ENCODE measurements at regions of chr20 and their contacts with region 1.

Region 1: DNA sequence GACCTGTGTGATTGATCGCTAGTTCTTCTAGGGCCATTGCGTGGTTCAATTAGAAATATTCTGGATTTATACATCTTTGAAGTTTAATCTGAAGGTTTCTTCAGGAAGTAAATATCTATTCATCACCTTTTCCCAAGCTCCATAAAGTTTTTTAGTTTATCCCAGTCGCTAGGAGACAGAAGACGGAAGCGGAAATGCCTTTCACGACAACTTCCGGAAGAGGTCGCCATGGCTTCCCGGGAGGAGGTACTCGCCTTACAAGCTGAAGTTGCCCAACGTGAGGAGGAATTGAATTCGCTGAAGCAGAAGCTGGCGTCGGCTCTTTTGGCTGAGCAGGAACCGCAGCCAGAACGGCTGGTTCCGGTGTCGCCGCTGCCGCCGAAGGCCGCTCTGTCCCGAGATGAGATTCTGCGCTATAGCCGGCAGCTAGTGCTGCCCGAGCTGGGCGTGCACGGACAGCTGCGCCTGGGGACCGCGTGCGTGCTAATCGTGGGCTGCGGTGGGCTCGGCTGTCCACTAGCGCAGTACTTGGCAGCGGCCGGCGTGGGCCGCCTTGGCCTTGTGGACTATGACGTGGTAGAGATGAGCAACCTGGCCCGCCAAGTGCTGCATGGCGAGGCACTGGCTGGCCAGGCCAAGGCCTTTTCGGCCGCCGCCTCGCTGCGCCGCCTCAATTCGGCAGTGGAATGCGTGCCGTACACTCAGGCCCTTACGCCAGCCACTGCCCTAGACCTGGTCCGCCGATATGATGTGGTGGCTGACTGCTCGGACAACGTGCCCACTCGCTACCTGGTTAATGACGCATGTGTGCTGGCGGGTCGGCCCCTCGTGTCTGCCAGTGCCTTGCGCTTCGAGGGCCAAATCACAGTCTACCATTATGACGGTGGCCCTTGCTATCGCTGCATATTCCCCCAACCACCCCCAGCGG is at the start of gene MOCS3:
- DNase-seq: peak; percentile 85
- ATAC-seq: peak; percentile 84
- H3K4me3 Mint-ChIP-seq: peak within 1 kb of the TSS; percentile 96
- H3K27ac Mint-ChIP-seq: peak within 1 kb of the TSS; percentile 100
- H3K4me1 Mint-ChIP-seq: peaks cover 48% of the 10 kb centered on the region
- H3K27me3 Mint-ChIP-seq: no peaks in the 10 kb centered on the region
- CTCF ChIP-seq: no peak
- total RNA-seq, gene MOCS3: 4.6 TPM

Region 2: GRCh38 chr20:50943069-50943468 is 15.8 kb before region 1 on chr20:
- CTCF ChIA-PET with region 1: interaction called, 11 read pairs
- POLR2A ChIA-PET with region 1: interaction called, 9 read pairs
- intact Hi-C with region 1: no loop called
- DNase-seq: no peak
- ATAC-seq: no peak
- H3K4me3 Mint-ChIP-seq: no peak overlapping the region
- H3K27ac Mint-ChIP-seq: no peak overlapping the region
- H3K4me1 Mint-ChIP-seq: no peaks in the 10 kb centered on the region
- H3K27me3 Mint-ChIP-seq: no peaks in the 10 kb centered on the region
- CTCF ChIP-seq: no peak

Region 3: DNA sequence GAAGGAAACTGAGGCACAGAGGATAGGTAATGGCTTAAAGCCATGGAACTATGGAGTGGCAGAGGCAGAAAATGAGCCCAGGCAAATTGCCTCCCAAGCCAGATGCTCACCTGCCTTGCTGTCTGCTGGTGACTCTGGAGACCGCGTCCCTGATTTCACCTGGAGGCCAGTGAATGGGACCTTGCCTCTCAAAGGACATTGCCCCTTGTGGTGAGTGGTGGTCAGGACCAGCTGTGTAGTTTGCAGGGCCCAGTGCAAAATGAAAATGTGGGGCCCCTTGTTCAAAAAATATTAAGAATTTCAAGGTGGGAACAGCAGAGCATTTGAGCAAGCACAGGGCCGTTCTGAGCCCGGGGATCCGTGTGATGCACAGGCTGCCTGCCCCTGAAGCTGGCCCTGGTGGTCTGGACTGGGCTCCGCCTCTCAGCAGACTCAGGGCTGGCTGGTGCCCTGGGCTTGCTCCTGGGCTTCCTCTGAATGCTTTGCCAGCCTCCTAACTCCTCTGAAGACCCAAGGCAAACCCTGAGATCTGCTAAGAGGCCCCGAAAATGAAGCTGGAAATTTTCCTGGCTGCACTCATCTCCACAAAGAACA is 83.9 kb after region 1 on chr20:
- CTCF ChIA-PET with region 1: no interaction called
- POLR2A ChIA-PET with region 1: no interaction called
- intact Hi-C with region 1: no loop called
- DNase-seq: no peak
- ATAC-seq: no peak
- H3K4me3 Mint-ChIP-seq: no peak overlapping the region
- H3K27ac Mint-ChIP-seq: no peak overlapping the region
- H3K4me1 Mint-ChIP-seq: no peaks in the 10 kb centered on the region
- H3K27me3 Mint-ChIP-seq: peaks cover 8% of the 10 kb centered on the region
- CTCF ChIP-seq: no peak

Measured in activated CD8-positive, alpha-beta T cell treated with anti-CD3 and anti-CD28 coated beads for 36 hours (primary cell).